PC-9 (cell line): ENCODE measurements at regions of chr17 and their contacts with region 1.

Region 1: DNA sequence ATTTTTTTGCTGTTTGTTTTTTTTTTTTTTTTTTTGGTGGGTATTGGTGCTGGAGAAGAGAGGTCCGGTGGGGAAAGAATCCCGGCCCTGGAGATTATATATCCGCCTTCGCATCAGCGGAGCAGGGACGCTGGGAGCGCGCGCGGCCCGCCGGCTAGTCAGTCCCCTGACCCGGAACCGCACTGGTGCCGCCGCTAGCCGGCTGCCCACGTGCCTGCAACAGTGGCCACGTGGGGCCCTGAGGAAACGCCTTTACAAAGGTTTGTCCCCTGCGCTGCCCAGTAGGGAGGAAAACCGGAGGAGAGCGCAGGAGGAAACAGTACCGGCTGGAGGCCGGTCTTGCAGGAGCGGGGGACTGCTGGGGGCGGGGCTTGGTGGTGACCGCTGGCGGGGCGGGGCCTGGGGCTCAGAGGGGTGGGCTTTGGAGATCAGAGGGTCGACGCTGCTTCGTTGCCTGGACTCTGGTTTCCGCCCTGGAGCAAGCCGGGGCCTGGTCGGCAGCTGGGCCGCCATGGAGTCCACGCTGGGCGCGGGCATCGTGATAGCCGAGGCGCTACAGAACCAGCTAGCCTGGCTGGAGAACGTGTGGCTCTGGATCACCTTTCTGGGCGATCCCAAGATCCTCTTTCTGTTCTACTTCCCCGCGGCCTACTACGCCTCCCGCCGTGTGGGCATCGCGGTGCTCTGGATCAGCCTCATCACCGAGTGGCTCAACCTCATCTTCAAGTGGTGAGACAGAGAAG is at the start of gene G6PC3:
- DNase-seq: peak; percentile 93
- H3K4me3 ChIP-seq: peak within 1 kb of the TSS; percentile 66
- H3K27ac ChIP-seq: peak within 1 kb of the TSS; percentile 87
- H3K4me1 ChIP-seq: peaks cover 40% of the 10 kb centered on the region
- H3K27me3 ChIP-seq: no peaks in the 10 kb centered on the region
- CTCF ChIP-seq: no peak
- total RNA-seq, gene G6PC3: 69.3 and 70.9 TPM in 2 replicates

Region 2: DNA sequence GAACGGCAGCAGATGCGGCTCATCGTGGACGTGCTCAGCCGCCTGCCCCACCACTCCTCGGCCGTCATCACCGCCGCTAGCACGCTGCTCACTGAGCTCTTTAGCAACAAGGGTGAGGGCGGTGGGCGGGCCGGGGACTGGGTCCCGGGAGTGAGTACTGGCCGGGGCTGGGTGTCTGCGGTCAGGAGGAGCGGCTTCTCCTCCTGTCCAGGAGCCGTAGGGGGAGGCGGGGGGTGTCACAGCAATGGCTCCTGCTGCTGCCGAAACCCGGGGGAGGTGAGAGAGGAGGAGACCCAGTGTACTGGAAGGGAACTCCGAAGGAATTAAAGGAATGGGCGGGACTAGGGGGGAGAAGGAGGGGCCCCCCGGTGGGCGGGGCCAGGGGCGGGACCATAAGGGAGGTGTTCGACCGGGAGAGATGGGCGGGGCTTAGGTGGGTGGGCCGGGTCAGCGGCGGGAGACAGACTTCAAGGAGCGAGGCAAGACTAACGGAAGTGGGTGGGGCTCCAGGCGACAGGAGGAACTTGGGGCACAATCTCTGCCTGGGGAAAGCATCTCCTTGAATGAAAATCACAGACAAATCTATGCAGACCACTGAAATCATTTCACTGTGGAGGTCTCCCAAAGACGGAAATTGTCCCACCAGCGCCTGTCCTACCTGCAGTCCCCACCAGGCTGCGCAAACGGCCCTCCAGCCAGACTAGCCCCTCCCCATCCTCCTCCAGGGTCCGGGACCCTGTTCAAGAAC is 63.9 kb before region 1 on chr17:
- CTCF ChIA-PET with region 1: interaction called, 4 read pairs
- POLR2A ChIA-PET with region 1: interaction called, 8 read pairs
- intact Hi-C with region 1: loop called (anchors 5 kb)
- DNase-seq: peak; percentile 88 to 93
- H3K4me3 ChIP-seq: peak overlapping the region; percentile 52
- H3K27ac ChIP-seq: 0 out of 2 replicates have a peak overlapping the region, but pooled peaks have one; percentile 3
- H3K4me1 ChIP-seq: peaks cover 12% of the 10 kb centered on the region
- H3K27me3 ChIP-seq: no peaks in the 10 kb centered on the region
- CTCF ChIP-seq: no peak; the same call in 1 of the 2 replicates

Region 3: GRCh38 chr17:44086364-44087311 is 16.0 kb after region 1 on chr17:
- CTCF ChIA-PET with region 1: no interaction called
- POLR2A ChIA-PET with region 1: interaction called, 15 read pairs
- intact Hi-C with region 1: no loop called
- DNase-seq: peak; percentile 56 to 58
- H3K4me3 ChIP-seq: no peak overlapping the region
- H3K27ac ChIP-seq: no peak overlapping the region
- H3K4me1 ChIP-seq: peaks cover 16% of the 10 kb centered on the region
- H3K27me3 ChIP-seq: no peaks in the 10 kb centered on the region
- CTCF ChIP-seq: no peak

Region 4: GRCh38 chr17:44110823-44111633 is 40.4 kb after region 1 on chr17:
- CTCF ChIA-PET with region 1: interaction called, 5 read pairs
- POLR2A ChIA-PET with region 1: no interaction called
- intact Hi-C with region 1: loop called (anchors 5 kb)
- DNase-seq: peak; percentile 61 to 90
- H3K4me3 ChIP-seq: peak overlapping the region; percentile 17; the same call in 1 of the 2 replicates
- H3K27ac ChIP-seq: no peak overlapping the region
- H3K4me1 ChIP-seq: peaks cover 47% of the 10 kb centered on the region
- H3K27me3 ChIP-seq: no peaks in the 10 kb centered on the region
- CTCF ChIP-seq: no peak

Region 5: DNA sequence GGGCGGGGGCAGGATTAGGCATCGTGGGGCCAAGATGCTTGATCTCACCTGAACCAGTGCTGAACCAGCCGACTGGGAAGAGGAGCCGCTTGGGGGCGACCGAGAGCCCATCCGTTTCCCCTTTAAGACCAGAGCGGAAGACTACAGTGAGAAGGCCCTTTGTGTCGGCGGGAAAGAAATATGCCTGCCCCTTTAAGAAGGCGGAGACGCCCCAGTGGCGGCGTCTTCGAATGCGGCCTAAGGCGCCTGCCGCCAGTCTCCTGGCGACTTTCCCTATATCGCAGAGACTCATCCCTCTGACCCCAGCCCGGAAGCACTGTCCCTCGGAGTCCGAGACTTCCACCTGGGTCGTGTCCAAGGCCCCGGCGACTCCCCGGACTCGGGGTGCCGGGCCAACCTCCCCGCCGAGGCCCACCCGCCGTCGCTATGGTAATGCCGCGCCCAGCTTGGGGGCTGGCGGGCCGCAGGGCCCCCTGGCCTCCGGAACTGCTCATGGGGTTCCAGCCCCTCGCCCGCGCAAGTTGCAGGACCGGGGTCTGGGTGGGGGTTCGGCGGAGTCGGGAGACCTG is 71.2 kb after region 1 on chr17 and contains the start of gene HROB:
- CTCF ChIA-PET with region 1: no interaction called
- POLR2A ChIA-PET with region 1: interaction called, 3 read pairs
- intact Hi-C with region 1: loop called (anchors 1 kb)
- DNase-seq: peak; percentile 86 to 96
- H3K4me3 ChIP-seq: peak within 1 kb of the TSS; percentile 91
- H3K27ac ChIP-seq: peak within 1 kb of the TSS; percentile 61
- H3K4me1 ChIP-seq: peaks cover 29% of the 10 kb centered on the region
- H3K27me3 ChIP-seq: no peaks in the 10 kb centered on the region
- CTCF ChIP-seq: peak; percentile 83
- total RNA-seq, gene HROB: 14.5 and 15.7 TPM in 2 replicates

Region 6: GRCh38 chr17:44308320-44308818 is 237.7 kb after region 1 on chr17 and contains the start of gene RUNDC3A:
- CTCF ChIA-PET with region 1: no interaction called
- POLR2A ChIA-PET with region 1: no interaction called
- intact Hi-C with region 1: no loop called
- DNase-seq: peak; percentile 44 to 74
- H3K4me3 ChIP-seq: peak within 1 kb of the TSS; percentile 56; the same call in 1 of the 2 replicates
- H3K27ac ChIP-seq: no peak within 1 kb of the TSS
- H3K4me1 ChIP-seq: peaks cover 7% of the 10 kb centered on the region
- H3K27me3 ChIP-seq: peaks cover 37% of the 10 kb centered on the region
- CTCF ChIP-seq: no peak
- total RNA-seq, gene RUNDC3A: not detected in 2 replicates

Region 7: DNA sequence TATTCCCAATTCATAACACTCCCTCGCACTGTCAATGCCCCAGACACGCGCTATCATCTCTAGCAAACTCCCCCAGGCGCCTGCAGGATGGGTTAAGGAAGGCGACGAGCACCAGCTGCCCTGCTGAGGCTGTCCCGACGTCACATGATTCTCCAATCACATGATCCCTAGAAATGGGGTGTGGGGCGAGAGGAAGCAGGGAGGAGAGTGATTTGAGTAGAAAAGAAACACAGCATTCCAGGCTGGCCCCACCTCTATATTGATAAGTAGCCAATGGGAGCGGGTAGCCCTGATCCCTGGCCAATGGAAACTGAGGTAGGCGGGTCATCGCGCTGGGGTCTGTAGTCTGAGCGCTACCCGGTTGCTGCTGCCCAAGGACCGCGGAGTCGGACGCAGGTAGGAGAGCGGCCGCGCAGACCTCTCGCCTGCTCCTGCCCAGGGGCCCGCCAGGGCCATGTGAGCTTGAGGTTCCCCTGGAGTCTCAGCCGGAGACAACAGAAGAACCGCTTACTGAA is 274.4 kb after region 1 on chr17 and contains the start of gene GRN:
- CTCF ChIA-PET with region 1: interaction called, 3 read pairs
- POLR2A ChIA-PET with region 1: no interaction called
- intact Hi-C with region 1: loop called (anchors 10 kb)
- DNase-seq: peak; percentile 93 to 95
- H3K4me3 ChIP-seq: peak within 1 kb of the TSS; percentile 95
- H3K27ac ChIP-seq: peak within 1 kb of the TSS; percentile 31; the same call in 1 of the 2 replicates
- H3K4me1 ChIP-seq: peaks cover 20% of the 10 kb centered on the region
- H3K27me3 ChIP-seq: no peaks in the 10 kb centered on the region
- CTCF ChIP-seq: no peak
- total RNA-seq, gene GRN: 226 and 413 TPM in 2 replicates

Region 8: GRCh38 chr17:45051060-45051719 is 980.6 kb after region 1 on chr17 and contains the start of gene DCAKD:
- CTCF ChIA-PET with region 1: no interaction called
- POLR2A ChIA-PET with region 1: interaction called, 12 read pairs
- intact Hi-C with region 1: no loop called
- DNase-seq: peak; percentile 88 to 95
- H3K4me3 ChIP-seq: peak within 1 kb of the TSS; percentile 98
- H3K27ac ChIP-seq: peak within 1 kb of the TSS; percentile 92
- H3K4me1 ChIP-seq: peaks cover 26% of the 10 kb centered on the region
- H3K27me3 ChIP-seq: no peaks in the 10 kb centered on the region
- CTCF ChIP-seq: no peak
- total RNA-seq, gene DCAKD: 57.9 and 68.8 TPM in 2 replicates